H1 (cell line): ENCODE measurements at regions of chr2 and their contacts with region 1.

Region 1: GRCh38 chr2:47237375-47237821 is 82.3 kb upstream of the STPG4 start:
- DNase-seq: no peak
- H3K4me3 ChIP-seq: no peak overlapping the region
- H3K27ac ChIP-seq: no peak overlapping the region
- H3K4me1 ChIP-seq: peaks cover 6 to 24% (median 15%) of the 10 kb centered on the region in 4 experiments
- H3K27me3 ChIP-seq: no peaks in the 10 kb centered on the region; a peak in 1 of 7 replicates
- CTCF ChIP-seq: no peak
- EP300 ChIP-seq: no peak
- POLR2A ChIP-seq: no peak
- RAD21 ChIP-seq: no peak

Region 2: DNA sequence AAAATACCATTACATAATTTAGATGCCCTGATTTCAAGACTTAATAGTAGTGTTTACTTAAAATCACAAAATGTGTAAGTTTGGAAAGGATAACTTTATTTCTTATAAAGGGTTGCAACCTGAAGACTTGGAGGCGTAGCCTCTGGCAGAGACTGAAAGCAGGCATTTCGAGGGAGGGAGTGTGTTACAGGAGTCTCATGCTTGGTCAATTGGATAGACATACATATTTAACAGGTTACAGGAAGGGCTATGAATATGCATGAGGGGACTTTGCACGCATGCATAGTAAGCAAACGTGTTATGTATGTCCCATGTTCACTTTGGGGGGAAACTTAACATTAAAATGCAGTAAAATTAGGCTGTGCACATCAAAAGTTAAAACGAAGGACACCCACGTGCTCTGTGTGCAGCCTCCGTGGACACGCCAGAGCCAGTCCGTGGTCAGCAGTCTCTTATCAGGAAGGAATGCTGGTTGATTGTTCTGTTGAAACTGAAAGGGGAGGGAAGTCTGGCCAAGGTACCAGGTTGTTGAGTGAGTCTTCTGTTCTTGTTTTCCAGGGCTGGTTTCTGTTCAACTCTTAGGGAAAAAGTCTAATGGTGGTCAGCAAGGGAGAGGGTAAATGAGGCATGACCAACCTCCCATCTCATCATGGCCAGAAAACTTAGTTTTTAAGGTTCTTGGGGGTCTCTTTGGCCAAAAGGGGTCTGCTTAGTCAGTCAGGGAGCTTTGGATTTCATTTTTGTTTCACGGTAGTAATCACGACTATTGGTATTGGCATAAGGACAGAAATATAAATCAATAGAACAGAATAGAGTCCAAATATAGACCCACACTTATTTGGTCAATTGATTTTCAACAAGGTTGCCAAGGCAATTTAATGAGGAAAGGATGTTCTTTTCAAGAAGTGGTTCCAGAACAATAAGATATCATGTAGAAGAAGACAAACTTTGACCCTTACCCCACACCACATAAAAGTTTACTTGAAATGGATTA is 443.7 kb before region 1 on chr2:
- CTCF ChIA-PET with region 1: no interaction called
- POLR2A ChIA-PET with region 1: no interaction called
- DNase-seq: peak in 1 of 2 experiments; percentile 11
- H3K4me3 ChIP-seq: no peak overlapping the region
- H3K27ac ChIP-seq: no peak overlapping the region
- H3K4me1 ChIP-seq: no peaks in the 10 kb centered on the region
- H3K27me3 ChIP-seq: no peaks in the 10 kb centered on the region
- CTCF ChIP-seq: no peak
- EP300 ChIP-seq: no peak
- POLR2A ChIP-seq: no peak
- RAD21 ChIP-seq: no peak

Region 3: DNA sequence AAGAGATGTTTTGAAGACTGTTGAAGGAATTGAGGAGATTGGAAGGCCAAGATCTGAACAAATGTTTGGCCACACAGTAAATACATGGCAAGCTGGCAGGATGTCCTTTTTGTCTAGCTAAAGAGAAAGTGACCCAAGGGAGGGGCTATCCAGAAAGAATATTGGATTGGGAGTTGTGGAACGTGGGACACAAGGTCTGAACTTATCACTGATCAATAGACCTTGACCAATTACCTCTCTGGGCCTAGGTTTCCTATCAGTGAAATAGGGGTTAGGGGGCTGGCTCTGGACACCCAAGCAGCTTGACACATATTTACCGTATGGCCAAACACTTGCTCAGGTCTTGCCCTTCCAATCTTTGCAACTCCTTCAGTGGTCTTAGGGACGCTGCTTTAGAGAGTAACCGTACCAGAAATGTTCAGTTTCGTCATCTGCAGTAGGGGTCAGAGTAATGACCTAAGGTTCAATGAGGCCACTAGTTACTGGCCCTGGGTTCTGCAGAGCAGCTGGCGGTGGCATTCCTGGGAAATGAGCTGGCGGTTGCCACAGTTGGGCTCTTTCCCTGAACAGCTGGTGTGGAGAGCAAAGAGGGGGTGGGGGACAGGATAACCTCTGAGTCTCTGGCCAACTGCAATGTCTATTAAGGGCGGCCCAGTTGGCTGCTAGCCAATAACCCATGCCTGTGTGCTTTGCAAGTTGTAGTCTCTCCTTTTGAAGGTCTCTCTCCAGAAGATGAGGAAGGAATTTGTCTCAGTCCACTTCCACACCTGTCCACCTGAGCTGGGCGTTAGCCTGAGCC is 12.1 kb before region 1 on chr2:
- CTCF ChIA-PET with region 1: interaction called, 10 read pairs
- POLR2A ChIA-PET with region 1: interaction called, 6 read pairs
- DNase-seq: no peak
- H3K4me3 ChIP-seq: no peak overlapping the region
- H3K27ac ChIP-seq: no peak overlapping the region
- H3K4me1 ChIP-seq: peaks cover 0 to 3% (median under 1%) of the 10 kb centered on the region in 4 experiments; a peak in 4 of 7 replicates
- H3K27me3 ChIP-seq: no peaks in the 10 kb centered on the region
- CTCF ChIP-seq: no peak
- EP300 ChIP-seq: no peak
- POLR2A ChIP-seq: no peak
- RAD21 ChIP-seq: no peak

Region 4: DNA sequence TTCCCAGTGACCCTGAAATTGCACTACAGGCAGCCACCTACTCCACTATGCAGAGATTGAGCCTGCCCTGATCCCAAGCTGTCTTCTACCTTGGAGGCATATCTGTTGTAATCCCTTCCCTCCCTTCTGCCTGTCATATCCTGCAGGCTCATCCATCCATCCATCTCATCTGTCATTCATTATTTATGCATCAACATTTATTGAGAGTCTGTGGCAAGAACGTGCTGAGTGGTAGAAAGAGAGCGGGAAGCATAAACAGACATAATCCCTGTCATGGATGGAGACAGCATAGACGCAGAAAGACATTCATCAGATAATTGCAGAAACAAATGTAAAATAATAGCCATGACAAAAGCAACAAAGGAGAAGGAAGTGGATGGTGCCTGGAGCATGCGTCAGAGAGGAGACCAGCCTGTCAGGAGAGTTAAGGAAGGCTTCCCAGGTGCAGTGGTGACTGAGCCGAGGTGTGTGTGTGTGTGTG is 28.4 kb after region 1 on chr2:
- CTCF ChIA-PET with region 1: interaction called, 14 read pairs
- POLR2A ChIA-PET with region 1: interaction called, 4 read pairs
- DNase-seq: no peak
- H3K4me3 ChIP-seq: no peak overlapping the region
- H3K27ac ChIP-seq: no peak overlapping the region
- H3K4me1 ChIP-seq: peaks cover 10 to 21% (median 14%) of the 10 kb centered on the region in 4 experiments
- H3K27me3 ChIP-seq: no peaks in the 10 kb centered on the region
- CTCF ChIP-seq: no peak
- EP300 ChIP-seq: no peak
- POLR2A ChIP-seq: no peak
- RAD21 ChIP-seq: no peak